ENCODE measurements at regions of chr2 and their contacts with region 1.

Region 1: DNA sequence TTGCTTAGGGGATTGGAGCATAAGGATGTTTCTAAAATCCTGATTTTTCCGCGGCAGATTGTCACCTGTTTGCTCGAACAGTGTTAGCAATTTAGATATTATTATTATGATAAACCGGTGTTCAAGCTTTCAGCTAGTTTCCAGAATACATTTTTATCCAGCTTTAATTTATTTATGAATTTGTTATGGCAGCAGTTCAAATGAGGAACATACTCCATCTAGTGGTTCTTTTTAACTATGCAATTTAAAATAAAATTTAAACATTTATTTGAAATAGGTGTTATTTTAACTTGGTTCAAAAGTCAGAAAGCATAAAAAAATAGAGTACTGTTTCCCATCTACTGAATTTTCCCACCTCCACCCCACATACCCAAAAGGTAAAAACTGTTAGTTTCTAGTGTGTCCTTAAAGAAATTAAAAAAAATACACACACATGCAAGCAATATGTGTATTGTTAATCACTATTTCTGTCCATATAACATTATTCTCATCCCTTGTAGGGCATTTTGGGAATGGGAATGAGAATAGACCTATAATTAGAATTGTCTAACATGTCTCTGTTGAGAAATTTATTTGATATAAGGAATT is 23.2 kb downstream of the ACOXL start:
- DNase-seq: peak in 1 of 2 experiments; percentile 14
- ATAC-seq: no peak
- H3K4me3 ChIP-seq: no peak overlapping the region
- H3K27ac ChIP-seq: no peak overlapping the region
- H3K4me1 ChIP-seq: no peaks in the 10 kb centered on the region
- CTCF ChIP-seq: peak; percentile 67
- EP300 ChIP-seq: no peak
- POLR2A ChIP-seq: no peak
- RAD21 ChIP-seq: peak; percentile 61 to 72

Region 2: DNA sequence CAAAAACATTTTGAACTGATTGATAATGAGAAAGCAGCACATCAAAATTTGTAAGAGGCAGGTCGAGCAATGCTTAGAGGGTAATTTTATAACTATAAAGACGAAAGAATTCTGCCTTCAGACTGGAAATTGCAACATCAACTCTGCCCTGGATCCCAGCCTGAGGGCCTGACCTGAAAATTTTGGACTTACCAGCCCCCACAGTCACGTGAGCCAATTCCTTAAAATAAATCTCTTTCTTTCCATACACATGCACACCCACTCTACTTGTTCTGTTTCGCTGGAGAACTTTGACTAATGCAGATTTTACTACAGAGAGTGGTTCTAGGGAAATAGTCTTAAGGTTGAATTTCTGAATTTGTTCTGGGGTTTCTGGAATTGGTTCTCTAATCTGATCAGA is 37.9 kb before region 1 on chr2:
- CTCF ChIA-PET with region 1: interaction called, 11 read pairs
- POLR2A ChIA-PET with region 1: no interaction called
- DNase-seq: no peak
- ATAC-seq: no peak
- H3K4me3 ChIP-seq: no peak overlapping the region
- H3K27ac ChIP-seq: no peak overlapping the region
- H3K4me1 ChIP-seq: no peaks in the 10 kb centered on the region
- CTCF ChIP-seq: no peak
- EP300 ChIP-seq: no peak
- POLR2A ChIP-seq: no peak
- RAD21 ChIP-seq: no peak

Region 3: DNA sequence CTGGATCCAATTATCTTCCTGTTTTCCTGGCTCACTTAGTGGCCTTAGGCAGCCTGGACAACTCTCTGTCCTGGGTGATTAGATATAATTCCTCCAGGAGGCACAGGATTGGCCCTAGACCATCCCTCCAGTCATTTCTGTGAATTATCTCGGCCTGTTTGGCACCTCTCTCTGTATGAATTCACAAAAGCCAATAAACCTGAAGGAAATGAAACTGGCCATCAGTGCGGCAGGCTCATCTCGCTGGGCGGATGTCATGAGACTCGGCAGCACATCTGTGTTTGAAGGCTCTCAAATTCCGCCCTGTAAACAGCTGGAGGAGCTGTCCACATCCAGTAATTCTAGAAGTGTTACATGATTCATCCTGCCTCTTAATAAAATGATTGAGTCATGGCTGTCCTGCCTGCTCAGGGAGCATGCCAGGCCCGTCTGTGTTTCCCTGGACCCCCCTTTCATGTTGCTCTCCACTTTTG is 15.4 kb after region 1 on chr2:
- CTCF ChIA-PET with region 1: interaction called, 10 read pairs
- POLR2A ChIA-PET with region 1: no interaction called
- DNase-seq: peak in 1 of 2 experiments; percentile 6
- ATAC-seq: peak; percentile 49 to 58; a peak in 5 of 6 replicates
- H3K4me3 ChIP-seq: no peak overlapping the region
- H3K27ac ChIP-seq: no peak overlapping the region
- H3K4me1 ChIP-seq: no peaks in the 10 kb centered on the region
- CTCF ChIP-seq: no peak
- EP300 ChIP-seq: no peak
- POLR2A ChIP-seq: no peak
- RAD21 ChIP-seq: no peak

Region 4: DNA sequence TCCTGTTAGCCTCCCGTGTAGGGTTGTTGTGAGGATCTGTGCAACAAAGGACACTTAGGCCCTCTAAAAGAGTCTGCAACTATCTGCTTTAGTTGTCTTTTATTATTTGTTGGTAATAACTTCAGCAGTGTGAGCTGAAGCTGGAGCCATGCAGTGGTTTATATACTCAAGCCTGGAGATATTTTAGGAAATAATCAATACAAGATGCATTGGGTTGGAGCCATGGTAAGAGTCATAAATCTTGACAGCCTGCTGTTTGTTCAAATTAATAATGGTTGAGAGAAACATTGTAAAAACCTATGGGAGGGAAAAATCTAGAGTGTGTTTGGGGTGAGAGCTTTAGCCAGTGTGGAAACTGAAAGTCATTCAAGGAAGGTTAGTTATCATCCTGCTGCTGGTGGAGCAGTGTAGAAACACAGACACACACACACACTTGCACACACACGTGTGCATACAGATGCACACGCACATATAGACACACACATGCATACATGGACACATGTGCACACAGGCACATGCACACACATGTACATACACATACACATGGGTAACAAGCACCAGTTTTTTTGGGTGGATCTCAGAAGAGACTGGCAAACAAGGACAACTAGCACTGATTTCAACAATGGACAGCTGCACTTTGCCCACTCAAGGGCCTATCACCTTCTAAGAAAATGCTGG is 27.8 kb after region 1 on chr2:
- CTCF ChIA-PET with region 1: no interaction called
- POLR2A ChIA-PET with region 1: no interaction called
- DNase-seq: no peak
- ATAC-seq: no peak
- H3K4me3 ChIP-seq: no peak overlapping the region
- H3K27ac ChIP-seq: no peak overlapping the region
- H3K4me1 ChIP-seq: no peaks in the 10 kb centered on the region
- CTCF ChIP-seq: no peak
- EP300 ChIP-seq: no peak
- POLR2A ChIP-seq: no peak
- RAD21 ChIP-seq: no peak

Region 5: GRCh38 chr2:110948027-110948674 is 192.6 kb after region 1 on chr2:
- CTCF ChIA-PET with region 1: no interaction called
- POLR2A ChIA-PET with region 1: no interaction called
- DNase-seq: no peak
- ATAC-seq: no peak
- H3K4me3 ChIP-seq: no peak overlapping the region
- H3K27ac ChIP-seq: no peak overlapping the region
- H3K4me1 ChIP-seq: no peaks in the 10 kb centered on the region
- CTCF ChIP-seq: no peak
- EP300 ChIP-seq: no peak
- POLR2A ChIP-seq: no peak
- RAD21 ChIP-seq: no peak